Caco-2 (cell line): ENCODE measurements at regions of chr9 and their contacts with region 1.

Region 1: GRCh38 chr9:74379718-74380117 is 117.4 kb upstream of the RORB start:
- DNase-seq: peak; percentile 13 to 24
- H3K4me3 ChIP-seq: no peak overlapping the region
- H3K4me3 Mint-ChIP-seq: no peak overlapping the region
- H3K27ac Mint-ChIP-seq: no peak overlapping the region
- H3K4me1 ChIP-seq: no peaks in the 10 kb centered on the region
- H3K4me1 Mint-ChIP-seq: no peaks in the 10 kb centered on the region
- H3K27me3 ChIP-seq: no peaks in the 10 kb centered on the region
- H3K27me3 Mint-ChIP-seq: no peaks in the 10 kb centered on the region
- CTCF ChIP-seq: peak in 1 of 2 experiments; percentile 40

Region 2: GRCh38 chr9:73916016-73916673 is 463.6 kb before region 1 on chr9:
- CTCF ChIA-PET with region 1: interaction called, 3 read pairs
- POLR2A ChIA-PET with region 1: no interaction called
- intact Hi-C with region 1: loop called (anchors 10 kb)
- DNase-seq: peak in 1 of 2 experiments; percentile 2
- H3K4me3 ChIP-seq: no peak overlapping the region
- H3K4me3 Mint-ChIP-seq: no peak overlapping the region
- H3K27ac Mint-ChIP-seq: no peak overlapping the region
- H3K4me1 ChIP-seq: no peaks in the 10 kb centered on the region
- H3K4me1 Mint-ChIP-seq: no peaks in the 10 kb centered on the region
- H3K27me3 ChIP-seq: no peaks in the 10 kb centered on the region
- H3K27me3 Mint-ChIP-seq: no peaks in the 10 kb centered on the region
- CTCF ChIP-seq: peak in 1 of 2 experiments; percentile 10